ENCODE measurements at regions of chr15 and their contacts with region 1.

Region 1: DNA sequence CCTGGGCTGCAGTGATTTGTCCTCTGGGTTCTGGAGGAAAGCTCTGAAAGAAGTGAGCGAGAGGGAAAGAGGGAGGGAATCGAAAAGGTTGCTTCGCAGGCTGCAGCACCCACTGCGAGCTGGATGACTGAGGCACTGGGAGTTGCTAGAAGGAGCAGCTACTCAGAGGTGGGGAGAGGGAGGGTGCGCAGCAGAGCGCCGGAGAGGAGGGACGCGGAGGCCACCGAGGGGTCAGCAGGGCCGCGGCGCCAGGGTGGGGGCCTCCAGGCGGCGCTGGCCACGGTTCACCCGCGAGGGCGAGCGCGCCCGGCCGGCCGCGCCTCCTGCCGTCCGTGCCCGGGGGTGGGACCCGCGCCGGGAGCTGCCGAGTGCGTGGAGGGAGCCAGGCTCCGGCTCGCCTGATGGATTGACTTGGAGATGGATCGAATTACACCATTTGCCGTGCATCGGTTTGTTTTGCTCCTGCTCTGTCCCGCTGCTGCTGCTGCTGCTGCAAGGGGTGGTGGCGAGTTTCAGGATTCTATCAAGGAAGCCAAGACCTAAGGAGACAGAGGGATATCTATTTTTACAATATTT is at the start of gene SEMA6D:
- DNase-seq: peak; percentile 86
- H3K27ac ChIP-seq: peak within 1 kb of the TSS; percentile 82
- CTCF ChIP-seq: peak; percentile 83

Region 2: GRCh38 chr15:47553947-47554346 is 163.2 kb before region 1 on chr15:
- CTCF ChIA-PET with region 1: no interaction called
- POLR2A ChIA-PET with region 1: no interaction called
- DNase-seq: no peak
- H3K27ac ChIP-seq: no peak overlapping the region
- CTCF ChIP-seq: no peak

Region 3: GRCh38 chr15:47673232-47674080 is 43.7 kb before region 1 on chr15:
- CTCF ChIA-PET with region 1: interaction called, 3 read pairs
- POLR2A ChIA-PET with region 1: interaction called, 10 read pairs
- DNase-seq: no peak
- H3K27ac ChIP-seq: no peak overlapping the region
- CTCF ChIP-seq: no peak

Region 4: DNA sequence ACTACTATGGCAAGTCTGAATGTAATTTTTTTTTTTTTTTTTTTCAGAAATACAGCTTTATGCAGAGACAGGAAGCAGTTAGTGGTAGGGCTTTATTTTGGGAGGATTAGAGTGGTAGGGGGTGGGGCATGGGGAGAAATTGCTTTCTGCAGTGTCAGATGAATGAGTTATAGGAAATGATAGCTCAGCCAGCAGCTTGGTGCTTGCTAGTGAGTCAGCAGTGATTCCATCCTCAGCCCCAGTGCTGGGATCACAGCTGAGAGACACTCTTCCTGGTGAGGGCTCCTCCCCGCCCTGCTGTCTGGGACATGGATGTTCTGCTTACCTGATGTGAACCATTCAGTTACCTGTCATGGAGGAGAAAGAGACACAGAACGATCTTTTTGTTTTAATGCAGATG is 39.7 kb after region 1 on chr15:
- CTCF ChIA-PET with region 1: no interaction called
- POLR2A ChIA-PET with region 1: no interaction called
- DNase-seq: peak; percentile 92
- H3K27ac ChIP-seq: peak overlapping the region; percentile 55
- CTCF ChIP-seq: no peak

Region 5: GRCh38 chr15:47917881-47918280 is 200.8 kb after region 1 on chr15:
- CTCF ChIA-PET with region 1: no interaction called
- POLR2A ChIA-PET with region 1: no interaction called
- DNase-seq: no peak
- H3K27ac ChIP-seq: no peak overlapping the region
- CTCF ChIP-seq: no peak

Measured in RWPE1 (cell line).